GM12878 (cell line): ENCODE measurements at regions of chr13 and their contacts with region 1.

Region 1: DNA sequence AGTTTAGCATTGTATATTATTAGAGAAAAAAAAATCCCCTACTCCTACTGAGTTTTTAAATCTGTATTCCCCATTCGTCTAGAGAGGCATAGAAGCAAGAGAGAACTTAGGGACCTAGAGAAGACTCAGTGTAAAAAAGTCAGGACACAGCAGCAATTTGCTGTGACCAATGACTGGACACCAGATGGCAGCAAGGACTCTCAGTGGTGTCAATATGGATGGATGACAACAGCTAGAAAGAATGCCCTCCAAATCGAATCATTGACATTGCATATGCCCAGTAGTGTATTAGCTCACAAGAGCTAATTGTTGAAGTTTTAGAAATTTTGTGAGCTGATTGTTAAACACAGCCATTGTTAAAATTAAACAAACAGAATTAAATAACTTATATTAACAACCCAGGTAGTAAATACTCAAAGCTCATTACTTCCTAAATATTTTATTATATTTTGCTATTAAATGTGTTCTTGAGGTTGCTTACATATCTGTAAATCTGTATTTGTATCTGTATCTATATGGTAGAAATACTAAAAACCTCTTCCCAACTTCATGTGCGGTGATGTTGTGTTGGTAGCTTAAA is 43.9 kb downstream of the SIAH3 start:
- DNase-seq: peak; percentile 8
- ATAC-seq: peak; percentile 93
- H3K4me3 ChIP-seq: no peak overlapping the region
- H3K27ac ChIP-seq: no peak overlapping the region
- H3K4me1 ChIP-seq: no peaks in the 10 kb centered on the region; the same call in 1 of the 2 replicates
- H3K27me3 ChIP-seq: no peaks in the 10 kb centered on the region
- CTCF ChIP-seq: peak; percentile 54 to 67 (median 58); a peak in 5 of 6 replicates
- EP300 ChIP-seq: no peak
- POLR2A ChIP-seq: no peak
- RAD21 ChIP-seq: peak; percentile 73

Region 2: GRCh38 chr13:45700971-45701900 is 106.4 kb before region 1 on chr13:
- CTCF ChIA-PET with region 1: no interaction called
- POLR2A ChIA-PET with region 1: no interaction called
- RAD21 ChIA-PET with region 1: no interaction called
- SMC1A ChIA-PET with region 1: no interaction called
- in situ Hi-C with region 1: no loop called
- intact Hi-C with region 1: no loop called
- DNase-seq: peak; percentile 93
- ATAC-seq: peak; percentile 81
- H3K4me3 ChIP-seq: peak overlapping the region; percentile 88
- H3K27ac ChIP-seq: peak overlapping the region; percentile 98
- H3K4me1 ChIP-seq: peaks cover 46% of the 10 kb centered on the region
- H3K27me3 ChIP-seq: no peaks in the 10 kb centered on the region
- CTCF ChIP-seq: peak; percentile 53 to 86 (median 85)
- EP300 ChIP-seq: no peak; a peak in 1 of 4 replicates
- POLR2A ChIP-seq: peak; percentile 82
- RAD21 ChIP-seq: peak; percentile 47

Region 3: GRCh38 chr13:45748941-45749759 is 58.5 kb before region 1 on chr13:
- CTCF ChIA-PET with region 1: no interaction called
- POLR2A ChIA-PET with region 1: no interaction called
- RAD21 ChIA-PET with region 1: no interaction called
- SMC1A ChIA-PET with region 1: no interaction called
- in situ Hi-C with region 1: no loop called
- intact Hi-C with region 1: no loop called
- DNase-seq: no peak
- ATAC-seq: no peak
- H3K4me3 ChIP-seq: no peak overlapping the region
- H3K27ac ChIP-seq: no peak overlapping the region
- H3K4me1 ChIP-seq: no peaks in the 10 kb centered on the region
- H3K27me3 ChIP-seq: no peaks in the 10 kb centered on the region; a peak in 3 of 4 replicates
- CTCF ChIP-seq: no peak
- EP300 ChIP-seq: no peak
- POLR2A ChIP-seq: no peak
- RAD21 ChIP-seq: no peak

Region 4: GRCh38 chr13:45879670-45880069 is 72.1 kb after region 1 on chr13:
- CTCF ChIA-PET with region 1: interaction called, 13 read pairs
- POLR2A ChIA-PET with region 1: no interaction called
- RAD21 ChIA-PET with region 1: interaction called, 3 read pairs
- SMC1A ChIA-PET with region 1: interaction called, 3 read pairs
- in situ Hi-C with region 1: no loop called
- intact Hi-C with region 1: loop called (anchors 1 kb)
- DNase-seq: no peak
- ATAC-seq: peak; percentile 64
- H3K4me3 ChIP-seq: no peak overlapping the region
- H3K27ac ChIP-seq: no peak overlapping the region
- H3K4me1 ChIP-seq: no peaks in the 10 kb centered on the region
- H3K27me3 ChIP-seq: peaks cover 3 to 6% of the 10 kb centered on the region in 2 experiments; a peak in 3 of 4 replicates
- CTCF ChIP-seq: peak; percentile 16 to 37 (median 19); a peak in 4 of 6 replicates
- EP300 ChIP-seq: no peak
- POLR2A ChIP-seq: no peak
- RAD21 ChIP-seq: peak; percentile 14; the same call in 1 of the 2 replicates

Region 5: GRCh38 chr13:46010148-46010547 is 202.5 kb after region 1 on chr13:
- CTCF ChIA-PET with region 1: interaction called, 14 read pairs
- POLR2A ChIA-PET with region 1: no interaction called
- RAD21 ChIA-PET with region 1: no interaction called
- SMC1A ChIA-PET with region 1: interaction called, 6 read pairs
- in situ Hi-C with region 1: no loop called
- intact Hi-C with region 1: no loop called
- DNase-seq: no peak
- ATAC-seq: no peak
- H3K4me3 ChIP-seq: no peak overlapping the region
- H3K27ac ChIP-seq: no peak overlapping the region
- H3K4me1 ChIP-seq: no peaks in the 10 kb centered on the region
- H3K27me3 ChIP-seq: no peaks in the 10 kb centered on the region
- CTCF ChIP-seq: no peak
- EP300 ChIP-seq: no peak
- POLR2A ChIP-seq: no peak
- RAD21 ChIP-seq: no peak

Region 6: GRCh38 chr13:46126552-46127357 is 319.1 kb after region 1 on chr13:
- CTCF ChIA-PET with region 1: interaction called, 19 read pairs
- POLR2A ChIA-PET with region 1: no interaction called
- RAD21 ChIA-PET with region 1: interaction called, 15 read pairs
- SMC1A ChIA-PET with region 1: interaction called, 5 read pairs
- in situ Hi-C with region 1: no loop called
- intact Hi-C with region 1: loop called (anchors 1 kb)
- DNase-seq: no peak
- ATAC-seq: peak; percentile 77
- H3K4me3 ChIP-seq: no peak overlapping the region
- H3K27ac ChIP-seq: no peak overlapping the region
- H3K4me1 ChIP-seq: no peaks in the 10 kb centered on the region
- H3K27me3 ChIP-seq: no peaks in the 10 kb centered on the region
- CTCF ChIP-seq: peak; percentile 92 to 98 (median 92); a peak in 5 of 6 replicates
- EP300 ChIP-seq: no peak
- POLR2A ChIP-seq: peak; percentile 65
- RAD21 ChIP-seq: peak; percentile 88